H1 (cell line): ENCODE measurements at regions of chr3 and their contacts with region 1.

Region 1: DNA sequence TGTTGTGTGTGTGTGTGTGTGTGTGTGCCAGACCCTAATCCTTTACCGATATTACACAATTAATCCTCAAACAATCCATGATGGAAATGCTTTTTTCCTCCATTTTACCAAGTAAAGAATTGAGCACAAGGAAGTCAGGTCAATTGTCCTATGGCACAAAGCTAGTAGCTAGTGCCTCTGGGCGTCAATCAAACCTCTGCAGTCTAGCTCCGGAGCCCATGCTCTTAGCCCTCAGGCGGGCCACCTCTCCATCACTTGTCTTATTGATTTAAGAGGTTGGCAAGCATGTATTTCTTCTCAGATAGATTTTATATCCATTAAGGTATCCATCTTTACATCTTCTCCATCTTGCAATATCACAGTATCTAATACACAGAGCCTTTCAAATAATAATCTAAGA is 886.6 kb downstream of the TBL1XR1 start:
- DNase-seq: no peak
- H3K4me3 ChIP-seq: no peak overlapping the region
- H3K27ac ChIP-seq: no peak overlapping the region
- H3K4me1 ChIP-seq: no peaks in the 10 kb centered on the region
- H3K27me3 ChIP-seq: no peaks in the 10 kb centered on the region
- CTCF ChIP-seq: no peak
- EP300 ChIP-seq: no peak
- POLR2A ChIP-seq: 0 out of 3 replicates have a peak, but pooled peaks of 1 of the 2 experiments have one; percentile 16
- RAD21 ChIP-seq: no peak

Region 2: DNA sequence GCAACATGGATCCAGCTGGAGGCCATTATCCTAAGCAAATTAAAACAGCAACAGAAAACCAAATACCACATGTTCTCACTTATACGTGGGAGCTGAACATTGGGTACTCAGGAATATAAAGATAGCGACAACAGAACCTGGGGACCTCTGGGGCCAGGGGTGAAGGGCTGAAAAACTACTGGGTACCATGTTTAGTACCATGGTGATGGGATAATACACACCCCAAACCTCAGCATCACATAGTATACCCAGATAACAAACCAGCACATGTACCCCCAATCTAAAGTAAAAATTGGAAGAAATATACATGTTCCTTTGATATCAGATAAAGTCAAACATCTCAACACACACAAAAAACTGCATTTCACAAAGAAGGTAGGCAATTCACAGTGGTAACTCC is 10.5 kb after region 1 on chr3:
- CTCF ChIA-PET with region 1: no interaction called
- POLR2A ChIA-PET with region 1: interaction called, 24 read pairs
- DNase-seq: no peak
- H3K4me3 ChIP-seq: peak overlapping the region; percentile 37 to 67 (median 47)
- H3K27ac ChIP-seq: peak overlapping the region; percentile 49; the same call in 1 of the 2 replicates
- H3K4me1 ChIP-seq: peaks cover 0 to 11% (median under 1%) of the 10 kb centered on the region in 4 experiments; a peak in 3 of 7 replicates
- H3K27me3 ChIP-seq: no peaks in the 10 kb centered on the region
- CTCF ChIP-seq: no peak
- EP300 ChIP-seq: no peak
- POLR2A ChIP-seq: no peak
- RAD21 ChIP-seq: no peak

Region 3: DNA sequence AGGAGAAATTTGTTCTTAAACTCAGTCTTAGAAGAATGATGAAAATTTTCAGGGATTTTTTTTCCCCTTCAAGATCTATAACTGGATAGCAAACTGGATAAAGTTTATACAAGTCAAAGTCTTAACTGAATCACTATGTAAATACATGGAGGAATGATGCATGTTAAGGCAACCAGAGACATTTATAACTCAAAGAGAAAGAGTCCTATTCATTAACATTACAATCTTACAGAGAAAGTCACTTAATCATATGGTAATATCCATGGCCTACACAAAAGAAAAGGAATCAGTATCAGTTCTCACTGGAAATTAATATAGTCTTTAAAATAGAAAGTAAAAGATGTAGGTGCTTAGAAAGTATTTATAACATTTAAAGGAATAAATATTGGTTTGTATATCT is 17.6 kb after region 1 on chr3:
- CTCF ChIA-PET with region 1: interaction called, 3 read pairs
- POLR2A ChIA-PET with region 1: interaction called, 24 read pairs
- DNase-seq: no peak
- H3K4me3 ChIP-seq: peak overlapping the region in 1 of 4 experiments; percentile 67; a peak in 3 of 8 replicates
- H3K27ac ChIP-seq: no peak overlapping the region
- H3K4me1 ChIP-seq: peaks cover 2 to 18% (median 12%) of the 10 kb centered on the region in 4 experiments; a peak in 5 of 7 replicates
- H3K27me3 ChIP-seq: no peaks in the 10 kb centered on the region
- CTCF ChIP-seq: no peak
- EP300 ChIP-seq: no peak
- POLR2A ChIP-seq: no peak
- RAD21 ChIP-seq: no peak

Region 4: DNA sequence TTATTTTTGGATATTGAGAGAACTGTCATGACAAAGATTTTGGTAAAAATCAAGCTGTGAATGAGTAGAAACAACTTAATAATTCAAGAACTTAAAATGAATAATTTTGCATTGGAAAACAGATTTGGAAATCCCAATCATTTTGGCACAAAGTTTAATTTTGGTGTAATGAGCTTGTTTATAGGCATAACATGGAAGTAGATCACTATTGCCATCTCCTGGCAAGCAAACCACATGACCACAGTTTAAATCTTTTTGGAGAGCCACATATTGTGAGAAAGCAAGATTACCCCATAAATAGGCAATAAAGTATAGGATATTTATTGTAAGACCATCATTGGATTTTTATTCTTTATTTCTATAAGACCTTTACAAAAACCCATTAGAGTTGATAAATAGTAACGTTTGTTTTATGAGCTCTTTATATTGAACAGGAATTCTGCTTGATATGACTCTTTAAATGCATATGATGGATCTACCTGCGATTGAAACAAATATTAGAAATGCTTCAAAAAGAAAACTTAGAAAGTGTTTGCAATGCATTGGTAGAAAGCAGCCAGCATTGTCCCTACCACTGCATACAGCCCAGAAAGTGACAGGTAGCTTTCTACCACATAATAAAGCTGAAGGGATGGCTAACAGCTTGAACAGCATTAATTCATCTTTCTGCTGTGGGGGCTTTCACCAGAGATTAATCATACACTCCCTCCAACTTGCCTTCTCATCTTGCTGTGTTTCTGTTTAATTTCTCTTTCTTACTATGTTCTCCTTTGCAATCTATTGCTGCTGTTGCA is 119.8 kb after region 1 on chr3:
- CTCF ChIA-PET with region 1: interaction called, 11 read pairs
- POLR2A ChIA-PET with region 1: interaction called, 4 read pairs
- DNase-seq: no peak
- H3K4me3 ChIP-seq: no peak overlapping the region
- H3K27ac ChIP-seq: no peak overlapping the region
- H3K4me1 ChIP-seq: peaks cover 0 to 5% (median 3%) of the 10 kb centered on the region in 4 experiments; a peak in 2 of 7 replicates
- H3K27me3 ChIP-seq: no peaks in the 10 kb centered on the region
- CTCF ChIP-seq: peak in 2 of 3 experiments; percentile 55 to 67; a peak in 2 of 4 replicates
- EP300 ChIP-seq: no peak
- POLR2A ChIP-seq: no peak
- RAD21 ChIP-seq: peak; percentile 92 to 94